ENCODE measurements at regions of chr6 and their contacts with region 1.

Region 1: GRCh38 chr6:168355716-168356449 is 36.3 kb upstream of the DACT2 start:
- DNase-seq: peak; percentile 69
- ATAC-seq: peak; percentile 74
- H3K4me3 Mint-ChIP-seq: no peak overlapping the region
- H3K27ac Mint-ChIP-seq: no peak overlapping the region
- H3K4me1 Mint-ChIP-seq: peaks cover 1% of the 10 kb centered on the region
- H3K27me3 Mint-ChIP-seq: peaks cover 14% of the 10 kb centered on the region

Region 2: GRCh38 chr6:167907837-167908681 is 447.8 kb before region 1 on chr6:
- CTCF ChIA-PET with region 1: no interaction called
- POLR2A ChIA-PET with region 1: no interaction called
- intact Hi-C with region 1: loop called in 1 of 2 experiments (anchors 10 kb)
- DNase-seq: no peak
- ATAC-seq: no peak
- H3K4me3 Mint-ChIP-seq: no peak overlapping the region
- H3K27ac Mint-ChIP-seq: no peak overlapping the region
- H3K4me1 Mint-ChIP-seq: no peaks in the 10 kb centered on the region
- H3K27me3 Mint-ChIP-seq: peaks cover 5% of the 10 kb centered on the region

Region 3: GRCh38 chr6:168150551-168151320 is 205.1 kb before region 1 on chr6:
- CTCF ChIA-PET with region 1: no interaction called
- POLR2A ChIA-PET with region 1: no interaction called
- intact Hi-C with region 1: loop called in 1 of 2 experiments (anchors 2 kb)
- DNase-seq: no peak
- ATAC-seq: no peak
- H3K4me3 Mint-ChIP-seq: no peak overlapping the region
- H3K27ac Mint-ChIP-seq: no peak overlapping the region
- H3K4me1 Mint-ChIP-seq: no peaks in the 10 kb centered on the region
- H3K27me3 Mint-ChIP-seq: peaks cover 5% of the 10 kb centered on the region

Region 4: DNA sequence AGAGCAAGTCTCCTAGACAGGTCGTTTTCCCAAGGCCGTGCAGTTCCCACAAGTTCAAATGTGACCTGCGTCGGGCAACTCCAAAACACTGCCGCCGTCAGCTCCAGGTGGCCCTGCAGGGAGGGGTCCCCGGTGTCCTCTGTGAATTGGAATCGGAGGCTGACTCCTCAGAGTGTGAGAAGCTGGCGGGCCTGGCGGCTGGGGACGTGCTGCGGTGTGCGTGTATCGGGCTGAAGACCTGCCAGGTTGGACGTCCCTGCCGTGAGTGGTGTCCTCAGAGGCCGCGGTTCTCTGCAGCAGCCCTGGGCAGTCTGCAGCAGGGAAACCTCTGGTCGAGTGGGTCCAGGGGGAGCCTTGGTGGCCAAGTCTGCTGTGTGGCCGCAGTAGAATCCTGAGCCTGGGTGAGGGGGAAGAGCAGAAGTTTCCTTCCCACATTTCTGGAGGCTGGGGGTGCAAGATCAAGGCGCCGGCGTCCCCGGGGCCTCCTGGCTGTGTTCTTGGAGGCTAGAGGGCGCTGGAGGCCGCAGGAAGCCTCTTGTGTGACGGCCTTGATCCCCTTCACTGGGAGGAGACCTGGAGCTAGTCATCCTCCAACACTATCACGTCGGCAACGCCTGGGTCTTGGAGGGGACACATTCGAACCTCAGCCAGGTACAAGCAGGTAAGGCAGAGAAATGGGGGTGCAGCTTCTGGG is 161.7 kb before region 1 on chr6:
- CTCF ChIA-PET with region 1: interaction called, 3 read pairs
- POLR2A ChIA-PET with region 1: no interaction called
- intact Hi-C with region 1: loop called in 1 of 2 experiments (anchors 2 kb)
- DNase-seq: peak; percentile 29
- ATAC-seq: no peak
- H3K4me3 Mint-ChIP-seq: no peak overlapping the region
- H3K27ac Mint-ChIP-seq: no peak overlapping the region
- H3K4me1 Mint-ChIP-seq: no peaks in the 10 kb centered on the region
- H3K27me3 Mint-ChIP-seq: peaks cover 8% of the 10 kb centered on the region

Region 5: DNA sequence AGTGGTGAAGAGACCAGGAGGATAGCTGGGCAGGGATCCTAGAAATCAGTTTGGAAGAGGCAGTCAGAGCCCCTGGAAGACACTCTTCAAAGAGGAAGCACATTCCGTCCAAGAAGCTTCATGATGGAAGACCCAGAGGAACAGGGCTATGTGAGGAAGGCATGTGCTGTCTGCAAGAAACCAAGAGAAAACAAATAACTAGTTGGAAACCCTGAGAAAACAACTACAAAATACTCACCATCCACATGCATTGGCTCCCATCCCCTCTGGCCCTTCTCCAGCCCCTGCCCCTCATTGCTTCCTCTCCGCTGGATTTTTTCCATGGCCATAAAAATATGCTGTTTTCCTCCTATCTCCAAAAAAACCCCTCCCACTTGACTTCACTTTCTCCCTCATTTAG is 44.2 kb after region 1 on chr6:
- CTCF ChIA-PET with region 1: no interaction called
- POLR2A ChIA-PET with region 1: no interaction called
- intact Hi-C with region 1: loop called in 1 of 2 experiments (anchors 5 kb)
- DNase-seq: no peak
- ATAC-seq: no peak
- H3K4me3 Mint-ChIP-seq: no peak overlapping the region
- H3K27ac Mint-ChIP-seq: no peak overlapping the region
- H3K4me1 Mint-ChIP-seq: no peaks in the 10 kb centered on the region
- H3K27me3 Mint-ChIP-seq: peaks cover 9% of the 10 kb centered on the region

Measured in activated CD4-positive, alpha-beta T cell treated with anti-CD3 and anti-CD28 coated beads for 36 hours (primary cell).